Ovary (tissue), 10 donors: ENCODE measurements at regions of chr1 and their contacts with region 1.

Region 1: GRCh38 chr1:239742416-239743109 is 349.1 kb upstream of the FMN2 start:
- DNase-seq: no peak
- H3K4me3 ChIP-seq: no peak overlapping the region
- H3K27ac ChIP-seq: no peak overlapping the region
- H3K4me1 ChIP-seq: peaks cover 9% of the 10 kb centered on the region
- H3K27me3 ChIP-seq: no peaks in the 10 kb centered on the region
- CTCF ChIP-seq: no peak
- EP300 ChIP-seq: no peak
- POLR2A ChIP-seq: no peak

Region 2: GRCh38 chr1:239276051-239276450 is 466.5 kb before region 1 on chr1:
- intact Hi-C with region 1: no loop called
- DNase-seq: no peak
- H3K4me3 ChIP-seq: no peak overlapping the region
- H3K27ac ChIP-seq: no peak overlapping the region
- H3K4me1 ChIP-seq: no peaks in the 10 kb centered on the region
- H3K27me3 ChIP-seq: no peaks in the 10 kb centered on the region
- CTCF ChIP-seq: no peak
- EP300 ChIP-seq: no peak
- POLR2A ChIP-seq: no peak

Region 3: GRCh38 chr1:239792157-239792556 is 49.6 kb after region 1 on chr1:
- intact Hi-C with region 1: loop called in 1 of 4 experiments (anchors 1 kb)
- DNase-seq: no peak
- H3K4me3 ChIP-seq: no peak overlapping the region
- H3K27ac ChIP-seq: no peak overlapping the region
- H3K4me1 ChIP-seq: no peaks in the 10 kb centered on the region
- H3K27me3 ChIP-seq: no peaks in the 10 kb centered on the region
- CTCF ChIP-seq: no peak
- EP300 ChIP-seq: no peak
- POLR2A ChIP-seq: no peak